Calu3 (cell line): ENCODE measurements at regions of chr3 and their contacts with region 1.

Region 1: DNA sequence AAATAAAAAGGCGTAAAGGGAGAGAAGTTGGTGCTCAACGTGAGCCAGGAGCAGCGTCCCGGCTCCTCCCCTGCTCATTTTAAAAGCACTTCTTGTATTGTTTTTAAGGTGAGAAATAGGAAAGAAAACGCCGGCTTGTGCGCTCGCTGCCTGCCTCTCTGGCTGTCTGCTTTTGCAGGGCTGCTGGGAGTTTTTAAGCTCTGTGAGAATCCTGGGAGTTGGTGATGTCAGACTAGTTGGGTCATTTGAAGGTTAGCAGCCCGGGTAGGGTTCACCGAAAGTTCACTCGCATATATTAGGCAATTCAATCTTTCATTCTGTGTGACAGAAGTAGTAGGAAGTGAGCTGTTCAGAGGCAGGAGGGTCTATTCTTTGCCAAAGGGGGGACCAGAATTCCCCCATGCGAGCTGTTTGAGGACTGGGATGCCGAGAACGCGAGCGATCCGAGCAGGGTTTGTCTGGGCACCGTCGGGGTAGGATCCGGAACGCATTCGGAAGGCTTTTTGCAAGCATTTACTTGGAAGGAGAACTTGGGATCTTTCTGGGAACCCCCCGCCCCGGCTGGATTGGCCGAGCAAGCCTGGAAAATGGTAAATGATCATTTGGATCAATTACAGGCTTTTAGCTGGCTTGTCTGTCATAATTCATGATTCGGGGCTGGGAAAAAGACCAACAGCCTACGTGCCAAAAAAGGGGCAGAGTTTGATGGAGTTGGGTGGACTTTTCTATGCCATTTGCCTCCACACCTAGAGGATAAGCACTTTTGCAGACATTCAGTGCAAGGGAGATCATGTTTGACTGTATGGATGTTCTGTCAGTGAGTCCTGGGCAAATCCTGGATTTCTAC is at the start of gene RARB:
- DNase-seq: peak; percentile 83
- H3K4me3 Mint-ChIP-seq: peak within 1 kb of the TSS; percentile 85
- H3K27ac Mint-ChIP-seq: peak within 1 kb of the TSS; percentile 91
- H3K4me1 Mint-ChIP-seq: peaks cover 33% of the 10 kb centered on the region
- H3K27me3 Mint-ChIP-seq: no peaks in the 10 kb centered on the region
- CTCF ChIP-seq: no peak
- total RNA-seq, gene RARB: 29.8 and 31.3 TPM in 2 replicates

Region 2: DNA sequence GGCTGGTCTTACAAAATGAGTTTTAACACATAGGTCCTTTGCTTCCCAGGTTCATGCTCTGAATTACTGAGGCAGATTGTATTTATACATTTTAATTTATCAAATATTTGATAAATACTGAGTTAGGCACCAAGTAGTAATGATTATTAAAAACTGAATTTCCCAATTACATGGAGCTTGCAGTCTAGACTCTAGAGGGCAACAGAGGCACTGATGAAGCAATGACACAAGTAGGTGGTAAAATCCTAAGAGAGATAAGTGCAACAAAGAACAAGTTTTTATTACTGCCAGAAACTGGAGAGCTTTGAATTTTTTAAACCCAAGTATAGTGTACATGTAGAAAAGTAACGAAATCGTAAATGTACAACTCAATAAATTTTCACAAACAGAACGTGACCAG is 406.3 kb before region 1 on chr3:
- CTCF ChIA-PET with region 1: interaction called, 4 read pairs
- intact Hi-C with region 1: loop called (anchors 5 kb)
- DNase-seq: peak; percentile 5
- H3K4me3 Mint-ChIP-seq: no peak overlapping the region
- H3K27ac Mint-ChIP-seq: no peak overlapping the region
- H3K4me1 Mint-ChIP-seq: no peaks in the 10 kb centered on the region
- H3K27me3 Mint-ChIP-seq: no peaks in the 10 kb centered on the region
- CTCF ChIP-seq: peak; percentile 17

Region 3: DNA sequence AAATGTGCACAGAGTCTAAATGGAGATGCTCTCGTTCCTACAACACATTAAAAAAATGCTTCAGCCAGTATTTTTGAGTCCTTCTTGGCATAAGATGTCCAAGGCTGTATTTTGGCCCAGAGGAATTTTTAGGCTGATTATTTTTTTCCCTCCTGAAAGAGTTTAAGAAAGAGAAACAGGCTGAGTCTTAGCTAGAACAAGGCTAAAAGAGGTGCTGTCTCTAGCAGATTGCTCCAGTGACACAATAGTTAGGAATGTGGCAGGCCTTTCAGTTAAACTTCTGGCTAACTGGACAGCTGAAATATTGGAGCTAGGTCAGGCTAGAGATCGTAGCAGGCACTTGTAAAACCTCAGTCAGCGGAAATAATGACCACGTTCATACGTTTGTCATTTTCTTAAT is 271.5 kb before region 1 on chr3:
- CTCF ChIA-PET with region 1: interaction called, 3 read pairs
- intact Hi-C with region 1: loop called (anchors 2 kb)
- DNase-seq: peak; percentile 32
- H3K4me3 Mint-ChIP-seq: no peak overlapping the region
- H3K27ac Mint-ChIP-seq: no peak overlapping the region
- H3K4me1 Mint-ChIP-seq: peaks cover 25% of the 10 kb centered on the region
- H3K27me3 Mint-ChIP-seq: no peaks in the 10 kb centered on the region
- CTCF ChIP-seq: no peak

Region 4: DNA sequence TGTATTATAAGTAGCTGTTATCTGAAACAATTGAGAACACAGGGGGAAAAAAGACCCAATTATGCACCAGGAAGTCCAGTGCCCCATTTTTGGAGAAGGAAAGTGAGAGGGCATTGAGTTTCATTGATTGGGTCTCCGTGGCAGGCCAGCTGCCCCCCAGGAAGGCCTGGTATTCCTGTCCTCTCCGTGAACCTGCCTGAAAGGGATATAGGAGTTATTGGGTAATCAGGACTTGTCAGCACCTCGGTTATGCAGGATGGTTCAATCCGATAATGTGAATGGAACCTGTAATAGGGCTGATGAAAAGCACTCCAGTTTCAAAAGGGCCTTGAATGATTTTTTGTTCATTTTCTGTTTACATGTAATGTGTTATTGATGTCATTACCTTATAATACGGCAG is 122.1 kb before region 1 on chr3:
- CTCF ChIA-PET with region 1: interaction called, 4 read pairs
- intact Hi-C with region 1: loop called (anchors 1 kb)
- DNase-seq: peak; percentile 70
- H3K4me3 Mint-ChIP-seq: peak overlapping the region; percentile 22
- H3K27ac Mint-ChIP-seq: peak overlapping the region; percentile 52
- H3K4me1 Mint-ChIP-seq: peaks cover 19% of the 10 kb centered on the region
- H3K27me3 Mint-ChIP-seq: no peaks in the 10 kb centered on the region
- CTCF ChIP-seq: no peak

Region 5: GRCh38 chr3:25542492-25543039 is 114.4 kb after region 1 on chr3:
- CTCF ChIA-PET with region 1: no interaction called
- intact Hi-C with region 1: no loop called
- DNase-seq: no peak
- H3K4me3 Mint-ChIP-seq: no peak overlapping the region
- H3K27ac Mint-ChIP-seq: no peak overlapping the region
- H3K4me1 Mint-ChIP-seq: no peaks in the 10 kb centered on the region
- H3K27me3 Mint-ChIP-seq: no peaks in the 10 kb centered on the region
- CTCF ChIP-seq: no peak